ENCODE measurements at regions of chr10 and their contacts with region 1.

Region 1: GRCh38 chr10:88389456-88389855 is 193.7 kb downstream of the RNLS start:
- DNase-seq: no peak
- H3K4me3 ChIP-seq: no peak overlapping the region
- H3K27ac ChIP-seq: no peak overlapping the region
- H3K4me1 ChIP-seq: peaks cover 26% of the 10 kb centered on the region
- H3K27me3 ChIP-seq: no peaks in the 10 kb centered on the region
- CTCF ChIP-seq: peak; percentile 60

Region 2: GRCh38 chr10:88042160-88043100 is 347.0 kb before region 1 on chr10:
- CTCF ChIA-PET with region 1: no interaction called
- POLR2A ChIA-PET with region 1: no interaction called
- intact Hi-C with region 1: loop called (anchors 2 kb)
- DNase-seq: peak; percentile 52 to 67
- H3K4me3 ChIP-seq: no peak overlapping the region
- H3K27ac ChIP-seq: no peak overlapping the region
- H3K4me1 ChIP-seq: peaks cover 29% of the 10 kb centered on the region
- H3K27me3 ChIP-seq: no peaks in the 10 kb centered on the region
- CTCF ChIP-seq: no peak

Region 3: DNA sequence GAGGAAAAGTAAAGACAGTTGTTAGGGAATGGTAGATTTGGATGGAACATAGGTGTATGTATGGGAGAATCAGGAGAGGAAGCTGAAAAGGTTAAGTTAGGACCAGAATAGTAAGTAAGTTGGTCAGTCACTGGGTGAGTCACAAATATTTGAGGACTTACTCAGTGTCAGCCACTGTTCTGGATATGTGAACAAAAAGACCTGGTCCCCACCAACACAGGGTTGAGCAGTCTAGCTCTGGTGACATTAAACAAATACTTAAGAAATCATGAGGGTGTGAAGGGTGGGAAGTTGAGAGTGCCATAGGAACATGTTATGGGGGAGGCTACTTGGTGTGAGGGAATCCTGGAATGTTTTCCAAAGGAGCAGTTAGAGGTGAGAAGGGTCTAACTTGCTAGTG is 279.1 kb before region 1 on chr10:
- CTCF ChIA-PET with region 1: no interaction called
- POLR2A ChIA-PET with region 1: no interaction called
- intact Hi-C with region 1: loop called (anchors 1 kb)
- DNase-seq: peak; percentile 26 to 78
- H3K4me3 ChIP-seq: no peak overlapping the region
- H3K27ac ChIP-seq: peak overlapping the region; percentile 59
- H3K4me1 ChIP-seq: peaks cover 12% of the 10 kb centered on the region
- H3K27me3 ChIP-seq: no peaks in the 10 kb centered on the region
- CTCF ChIP-seq: no peak

Region 4: GRCh38 chr10:88157981-88158465 is 231.4 kb before region 1 on chr10:
- CTCF ChIA-PET with region 1: no interaction called
- POLR2A ChIA-PET with region 1: no interaction called
- intact Hi-C with region 1: loop called (anchors 1 kb)
- DNase-seq: peak in 1 of 2 experiments; percentile 73
- H3K4me3 ChIP-seq: no peak overlapping the region
- H3K27ac ChIP-seq: peak overlapping the region; percentile 61
- H3K4me1 ChIP-seq: peaks cover 43% of the 10 kb centered on the region
- H3K27me3 ChIP-seq: no peaks in the 10 kb centered on the region
- CTCF ChIP-seq: no peak

Region 5: DNA sequence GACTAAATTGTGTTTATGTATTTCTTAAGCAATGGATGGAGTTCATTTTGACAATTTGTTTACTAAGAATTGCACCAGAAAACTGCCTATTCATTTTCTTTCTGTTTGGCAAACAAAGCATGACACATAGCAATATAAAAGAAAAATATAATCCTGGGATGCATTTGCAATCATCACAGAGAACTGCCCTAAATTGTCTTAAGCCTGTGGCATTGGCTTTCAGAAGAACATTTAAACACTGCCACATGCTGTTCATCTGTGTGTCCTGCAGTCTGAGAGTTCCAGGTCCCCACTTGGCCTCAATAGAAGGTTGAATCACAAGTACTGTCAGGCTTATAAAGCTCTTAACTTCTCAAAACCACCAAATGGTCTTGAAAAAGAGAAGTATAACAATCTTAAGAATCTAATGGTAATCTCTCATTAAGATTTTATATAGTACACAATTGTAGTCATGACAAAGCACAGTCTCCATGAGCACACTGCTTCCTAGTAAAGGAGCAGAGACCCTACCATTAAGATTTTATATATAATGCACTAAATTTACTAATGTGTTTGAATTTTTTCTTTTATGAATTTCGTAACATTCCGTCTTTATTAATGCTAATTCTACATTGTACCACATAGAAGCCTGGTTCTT is 163.8 kb after region 1 on chr10:
- CTCF ChIA-PET with region 1: interaction called, 5 read pairs
- POLR2A ChIA-PET with region 1: no interaction called
- intact Hi-C with region 1: loop called (anchors 1 kb)
- DNase-seq: peak; percentile 11 to 78
- H3K4me3 ChIP-seq: no peak overlapping the region
- H3K27ac ChIP-seq: peak overlapping the region; percentile 3; the same call in 1 of the 2 replicates
- H3K4me1 ChIP-seq: peaks cover 6% of the 10 kb centered on the region
- H3K27me3 ChIP-seq: no peaks in the 10 kb centered on the region
- CTCF ChIP-seq: peak; percentile 76

Region 6: DNA sequence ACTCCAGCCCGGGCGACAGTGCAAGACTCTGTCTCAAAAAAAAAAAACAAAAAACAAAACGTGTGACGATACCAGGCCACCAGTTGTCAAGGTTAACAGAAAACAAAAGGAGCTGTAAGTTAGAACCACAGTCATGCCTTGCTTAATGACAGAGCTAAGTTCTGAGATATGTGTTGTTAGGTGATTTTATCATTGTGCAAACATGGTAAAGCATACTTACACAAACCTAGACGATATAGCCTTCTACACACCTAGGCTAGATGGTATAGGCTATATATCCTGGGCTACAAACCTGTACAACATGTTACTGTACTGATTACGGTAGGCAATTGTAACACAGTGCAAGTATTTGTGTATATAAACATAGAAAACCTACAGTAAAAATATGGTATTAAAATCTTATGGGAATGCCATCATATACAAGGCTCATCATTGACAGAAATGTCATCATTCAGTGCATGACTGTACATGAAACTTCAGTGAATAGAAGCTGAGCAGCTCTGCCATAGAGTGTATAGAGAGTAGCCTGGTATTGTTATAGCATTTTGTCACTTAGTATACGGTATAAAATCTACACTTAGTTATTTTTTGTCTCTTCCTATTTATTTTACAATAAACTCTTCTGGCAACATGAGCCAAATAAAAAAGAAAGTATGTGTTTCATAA is 1904.3 kb after region 1 on chr10:
- CTCF ChIA-PET with region 1: no interaction called
- POLR2A ChIA-PET with region 1: no interaction called
- intact Hi-C with region 1: no loop called
- DNase-seq: no peak
- H3K4me3 ChIP-seq: no peak overlapping the region
- H3K27ac ChIP-seq: no peak overlapping the region
- H3K4me1 ChIP-seq: no peaks in the 10 kb centered on the region
- H3K27me3 ChIP-seq: no peaks in the 10 kb centered on the region
- CTCF ChIP-seq: no peak

Measured in PC-9 (cell line).